AG04449 (cell line): ENCODE measurements at regions of chr11 and their contacts with region 1.

Region 1: GRCh38 chr11:47373876-47374720 is 4.2 kb downstream of the SPI1 start:
- DNase-seq: no peak
- H3K4me3 ChIP-seq: no peak overlapping the region
- CTCF ChIP-seq: peak; percentile 98

Region 2: GRCh38 chr11:46700241-46701077 is 673.6 kb before region 1 on chr11 and contains the starts of genes ARHGAP1 and ZNF408:
- CTCF ChIA-PET with region 1: no interaction called
- POLR2A ChIA-PET with region 1: no interaction called
- DNase-seq: peak; percentile 95
- H3K4me3 ChIP-seq: peak within 1 kb of the TSS; percentile 99
- CTCF ChIP-seq: no peak

Region 3: DNA sequence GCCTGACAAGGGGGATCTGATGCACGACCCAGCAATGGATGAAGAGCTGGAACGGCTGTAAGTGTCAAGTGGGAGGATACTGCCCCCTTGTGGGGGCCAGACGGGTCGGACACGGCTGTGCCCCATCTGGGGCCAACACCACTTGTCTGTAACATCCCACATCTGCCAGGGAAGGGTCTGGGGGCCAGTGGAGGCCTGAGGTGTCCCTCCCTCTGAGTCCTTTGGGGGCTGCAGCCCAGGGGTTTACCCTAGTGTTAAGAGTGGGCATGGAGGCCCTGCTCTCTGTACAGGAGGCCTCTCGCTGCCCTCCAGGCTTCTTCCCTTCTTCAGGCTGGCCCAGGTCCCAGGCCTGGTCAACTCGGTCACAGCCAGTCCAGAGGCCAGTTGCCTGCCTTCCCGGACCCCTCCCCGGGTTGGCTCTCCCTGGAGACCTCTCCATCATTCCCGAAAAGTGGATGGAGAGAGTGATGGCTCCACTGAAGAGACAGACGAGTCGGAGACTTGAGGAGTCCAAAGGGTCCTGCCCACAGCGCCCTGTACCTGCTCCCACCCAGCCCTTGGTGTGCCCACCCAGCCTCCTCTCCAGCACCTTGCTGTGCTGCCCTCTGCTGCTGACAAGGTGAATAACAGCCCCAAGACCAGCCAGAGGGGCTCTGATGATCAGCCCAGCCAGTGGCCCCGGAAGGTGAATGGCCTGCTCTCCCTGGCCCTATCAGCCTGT is 212.8 kb before region 1 on chr11:
- CTCF ChIA-PET with region 1: no interaction called
- POLR2A ChIA-PET with region 1: no interaction called
- DNase-seq: no peak
- H3K4me3 ChIP-seq: no peak overlapping the region
- CTCF ChIP-seq: peak; percentile 85

Region 4: GRCh38 chr11:47361419-47361818 is 12.7 kb before region 1 on chr11:
- CTCF ChIA-PET with region 1: interaction called, 30 read pairs
- POLR2A ChIA-PET with region 1: no interaction called
- DNase-seq: no peak
- H3K4me3 ChIP-seq: no peak overlapping the region
- CTCF ChIP-seq: no peak

Region 5: DNA sequence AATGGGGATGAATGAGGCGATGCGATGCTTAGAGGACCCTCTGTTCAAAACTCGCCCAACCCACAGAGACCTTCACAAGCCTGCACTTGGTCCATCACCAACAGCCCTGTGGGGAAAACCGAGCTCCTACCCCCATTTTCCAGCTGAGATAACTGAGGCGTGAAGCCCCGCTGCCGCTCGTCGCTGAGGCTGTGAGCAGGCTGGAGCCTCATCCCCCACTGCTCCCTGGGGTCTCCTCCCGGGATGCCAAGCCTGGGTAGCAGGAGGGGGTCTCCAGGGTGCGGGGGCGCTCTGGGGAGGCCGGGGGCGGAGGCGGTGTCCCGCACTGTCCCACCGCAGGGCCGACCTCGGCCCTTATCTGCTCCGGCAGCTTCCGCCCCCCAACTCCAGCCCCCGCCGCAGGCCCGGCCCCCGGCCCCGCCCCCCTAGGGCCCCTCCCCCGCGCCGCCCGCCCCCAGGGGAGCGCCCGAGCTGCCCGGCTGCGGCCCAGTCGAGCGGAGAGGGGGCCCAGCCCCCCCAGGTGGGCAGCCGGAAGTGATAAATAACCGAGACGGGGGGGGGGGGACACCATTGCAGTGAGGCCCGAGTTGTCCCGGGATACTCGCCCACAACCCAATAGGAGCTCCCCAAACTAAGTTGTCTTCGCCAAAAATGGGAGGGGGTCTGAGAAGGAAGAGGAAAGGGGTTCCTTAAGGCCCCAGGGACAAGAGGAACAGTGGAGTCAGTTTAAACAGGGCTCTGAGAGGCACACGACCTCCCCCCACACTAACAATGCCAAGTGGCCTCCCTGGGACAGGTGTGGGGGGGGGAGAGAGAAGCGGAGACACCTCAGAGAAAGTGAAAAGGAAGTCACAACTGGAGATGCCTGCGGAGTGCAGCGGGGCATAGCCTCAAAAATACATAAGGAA is 26.0 kb after region 1 on chr11:
- CTCF ChIA-PET with region 1: interaction called, 123 read pairs
- POLR2A ChIA-PET with region 1: interaction called, 3 read pairs
- DNase-seq: no peak
- H3K4me3 ChIP-seq: peak overlapping the region; percentile 57
- CTCF ChIP-seq: no peak

Region 6: DNA sequence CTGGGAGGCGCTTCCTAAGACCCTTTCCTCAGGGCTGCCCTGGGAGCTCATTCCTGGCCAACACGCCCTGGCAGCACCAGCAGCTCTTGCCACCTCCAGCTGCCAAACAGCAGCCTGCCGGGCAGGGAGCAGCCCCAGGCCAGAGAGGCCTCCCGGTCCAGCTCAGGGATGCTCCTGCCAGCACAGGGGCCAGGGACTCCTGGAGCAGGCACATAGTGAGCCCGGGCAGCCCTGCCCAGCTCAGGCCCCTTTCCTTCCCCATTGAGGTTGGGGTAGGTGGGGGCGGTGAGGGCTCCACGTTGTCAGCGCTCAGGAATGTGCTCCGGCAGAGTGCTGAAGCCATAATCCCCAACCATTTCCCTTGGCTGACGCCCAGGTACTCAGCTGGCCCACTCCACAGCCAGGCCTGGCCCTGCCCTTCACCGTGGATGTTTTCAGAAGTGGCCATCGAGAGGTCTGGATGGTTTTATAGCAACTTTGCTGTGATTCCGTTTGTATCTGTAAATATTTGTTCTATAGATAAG is 41.9 kb after region 1 on chr11:
- CTCF ChIA-PET with region 1: interaction called, 88 read pairs
- POLR2A ChIA-PET with region 1: no interaction called
- DNase-seq: no peak
- H3K4me3 ChIP-seq: no peak overlapping the region; the same call in 1 of the 2 replicates
- CTCF ChIP-seq: no peak

Region 7: GRCh38 chr11:47460571-47461235 is 86.6 kb after region 1 on chr11:
- CTCF ChIA-PET with region 1: interaction called, 118 read pairs
- POLR2A ChIA-PET with region 1: no interaction called
- DNase-seq: no peak
- H3K4me3 ChIP-seq: no peak overlapping the region
- CTCF ChIP-seq: no peak